Sigmoid colon (tissue), 7 donors: ENCODE measurements at regions of chr3 and their contacts with region 1.

Region 1: GRCh38 chr3:57164657-57165573 is at the start of gene IL17RD:
- DNase-seq: peak; percentile 90
- H3K4me3 ChIP-seq: peak within 1 kb of the TSS; percentile 63 to 83 (median 76)
- H3K27ac ChIP-seq: peak within 1 kb of the TSS; percentile 55 to 87 (median 78)
- H3K4me1 ChIP-seq: peaks cover 0 to 59% (median 40%) of the 10 kb centered on the region in 4 donors
- H3K27me3 ChIP-seq: no peaks in the 10 kb centered on the region
- CTCF ChIP-seq: no peak
- EP300 ChIP-seq: no peak
- POLR2A ChIP-seq: peak in 1 of 2 donors; percentile 37
- total RNA-seq, gene IL17RD: 16.8 to 46.8 (median 20.6) TPM

Region 2: DNA sequence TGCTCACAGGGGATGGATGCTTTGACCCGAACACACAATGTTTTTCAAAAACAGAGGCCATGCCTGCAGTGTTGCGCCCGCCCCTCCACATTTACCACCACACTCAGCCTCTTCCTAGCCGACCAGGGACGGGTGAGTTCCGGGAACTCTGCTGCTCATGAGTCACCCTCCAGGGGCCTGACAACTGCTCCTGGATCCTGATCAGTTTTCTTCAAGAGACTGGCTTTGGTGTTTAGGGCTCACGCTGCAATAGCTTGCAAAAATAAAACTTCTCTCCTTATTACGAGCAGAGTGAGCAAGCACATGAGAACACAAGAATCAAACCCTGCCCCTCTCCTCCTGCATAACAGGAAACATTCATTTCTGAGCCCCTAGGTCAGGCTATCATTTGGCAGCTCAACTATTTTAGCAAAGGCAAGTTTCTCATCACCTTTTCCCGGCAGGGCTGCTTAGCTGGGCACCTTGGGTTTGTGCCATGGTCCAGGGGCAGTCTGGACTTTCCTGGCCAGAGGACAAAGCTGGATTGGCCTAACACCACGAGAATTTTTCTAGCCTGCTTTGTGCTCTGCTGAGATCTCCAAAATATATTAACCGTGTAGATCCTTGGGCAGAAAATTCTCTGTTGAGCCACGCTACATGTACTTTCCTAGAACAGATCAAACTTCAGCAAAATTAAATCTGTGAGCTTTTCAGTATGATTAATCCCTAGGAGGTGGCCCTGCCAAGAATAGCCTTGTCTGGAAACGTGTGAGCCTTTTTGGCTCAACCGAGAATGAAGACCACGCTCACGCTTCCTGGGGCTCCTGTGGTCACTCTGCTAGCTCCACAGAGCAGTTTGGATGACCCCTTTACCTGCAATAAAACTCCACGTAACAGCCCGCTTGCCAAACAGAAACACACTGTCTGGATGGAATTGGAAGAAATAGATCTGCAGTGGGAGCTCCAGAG is 157.1 kb before region 1 on chr3:
- intact Hi-C with region 1: loop called (anchors 5 kb)
- DNase-seq: peak; percentile 93
- H3K4me3 ChIP-seq: peak overlapping the region in 2 of 4 donors; percentile 18 to 23
- H3K27ac ChIP-seq: peak overlapping the region; percentile 79 to 92 (median 88)
- H3K4me1 ChIP-seq: peaks cover 0 to 89% (median 80%) of the 10 kb centered on the region in 4 donors
- H3K27me3 ChIP-seq: no peaks in the 10 kb centered on the region
- CTCF ChIP-seq: no peak
- EP300 ChIP-seq: peak in 1 of 4 donors; percentile 59
- POLR2A ChIP-seq: no peak

Region 3: DNA sequence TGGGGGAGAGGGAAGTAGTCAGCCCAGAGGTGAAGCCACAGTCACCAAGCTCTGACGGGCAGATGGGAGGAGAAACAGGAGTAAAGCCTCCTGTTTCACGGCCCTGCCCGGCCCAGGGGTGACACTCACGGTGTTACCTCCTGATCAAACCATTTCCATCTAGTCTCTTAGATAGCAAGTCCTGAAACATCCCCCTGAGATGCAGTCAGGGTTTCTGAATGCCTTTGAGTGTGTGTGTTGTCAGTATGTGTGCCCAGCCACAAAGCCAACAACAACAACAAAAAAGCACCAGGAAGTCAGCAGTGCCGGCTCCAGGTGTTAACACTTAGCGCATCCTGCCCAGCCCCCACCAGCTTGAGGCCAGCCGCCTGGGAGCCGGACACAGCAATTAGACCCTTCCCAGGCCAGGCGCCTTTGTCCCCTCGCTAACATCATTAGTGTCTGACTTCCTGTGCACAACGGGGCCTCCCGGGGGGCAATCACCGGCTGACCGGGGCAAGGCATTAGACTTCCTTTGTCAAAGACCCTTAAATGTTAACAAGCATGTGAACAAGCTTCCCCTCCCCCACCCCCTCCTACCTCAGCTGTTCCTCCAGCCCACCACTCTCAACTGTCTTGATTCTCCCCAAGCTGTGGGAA is 34.2 kb before region 1 on chr3:
- intact Hi-C with region 1: loop called (anchors 2 kb)
- DNase-seq: no peak
- H3K4me3 ChIP-seq: no peak overlapping the region
- H3K27ac ChIP-seq: peak overlapping the region in 3 of 4 donors; percentile 80 to 87 (median 85)
- H3K4me1 ChIP-seq: peaks cover 0 to 50% (median 35%) of the 10 kb centered on the region in 4 donors
- H3K27me3 ChIP-seq: no peaks in the 10 kb centered on the region
- CTCF ChIP-seq: no peak
- EP300 ChIP-seq: no peak
- POLR2A ChIP-seq: no peak